Uterus (tissue), 4 donors: ENCODE measurements at regions of chr2 and their contacts with region 1.

Region 1: DNA sequence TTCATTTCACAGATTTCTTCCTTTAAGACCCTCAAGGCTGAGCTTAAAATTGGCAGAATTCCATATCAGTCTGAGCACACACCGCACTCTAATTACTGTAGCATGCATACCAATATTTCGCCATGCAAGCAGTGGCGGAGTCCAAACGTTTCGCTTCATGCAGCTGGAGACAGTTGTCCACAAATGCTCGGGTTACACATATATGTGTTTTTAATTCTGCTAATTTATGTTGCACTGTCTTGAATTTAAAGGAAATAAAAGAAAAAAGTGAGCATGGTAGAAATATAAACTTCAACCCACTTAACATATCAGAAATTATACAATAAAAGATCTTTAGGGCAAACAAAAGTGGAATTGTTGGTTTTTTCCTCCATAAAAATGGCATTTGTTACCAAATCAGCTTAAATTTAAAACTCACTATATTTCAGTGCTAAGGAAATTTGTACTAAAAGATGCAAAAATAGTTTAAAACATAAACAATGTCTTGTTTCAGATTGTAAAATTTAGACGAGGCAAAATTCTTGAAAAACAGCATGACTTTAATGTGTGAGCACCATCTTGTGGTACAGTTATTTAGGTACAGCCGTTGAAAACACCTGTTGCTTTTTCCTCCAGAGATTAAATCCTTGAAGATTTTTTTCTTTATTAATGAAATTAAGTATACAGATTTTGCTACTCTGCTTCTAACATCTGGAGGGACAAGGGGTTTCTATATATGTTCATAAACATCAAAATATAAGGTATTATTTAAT is 24.1 kb upstream of the KANSL1L start:
- DNase-seq: no peak
- H3K4me3 ChIP-seq: no peak overlapping the region
- H3K27ac ChIP-seq: no peak overlapping the region
- H3K4me1 ChIP-seq: peaks cover 0 to 3% of the 10 kb centered on the region in 2 donors
- H3K27me3 ChIP-seq: no peaks in the 10 kb centered on the region
- CTCF ChIP-seq: peak; percentile 69 to 76 (median 70)
- POLR2A ChIP-seq: no peak

Region 2: GRCh38 chr2:209977386-209978239 is 217.7 kb before region 1 on chr2:
- intact Hi-C with region 1: loop called (anchors 5 kb)
- DNase-seq: no peak
- H3K4me3 ChIP-seq: no peak overlapping the region
- H3K27ac ChIP-seq: no peak overlapping the region
- H3K4me1 ChIP-seq: no peaks in the 10 kb centered on the region
- H3K27me3 ChIP-seq: no peaks in the 10 kb centered on the region
- CTCF ChIP-seq: peak; percentile 52 to 66 (median 56)
- POLR2A ChIP-seq: no peak